ENCODE measurements at regions of chr5 and their contacts with region 1.

Region 1: DNA sequence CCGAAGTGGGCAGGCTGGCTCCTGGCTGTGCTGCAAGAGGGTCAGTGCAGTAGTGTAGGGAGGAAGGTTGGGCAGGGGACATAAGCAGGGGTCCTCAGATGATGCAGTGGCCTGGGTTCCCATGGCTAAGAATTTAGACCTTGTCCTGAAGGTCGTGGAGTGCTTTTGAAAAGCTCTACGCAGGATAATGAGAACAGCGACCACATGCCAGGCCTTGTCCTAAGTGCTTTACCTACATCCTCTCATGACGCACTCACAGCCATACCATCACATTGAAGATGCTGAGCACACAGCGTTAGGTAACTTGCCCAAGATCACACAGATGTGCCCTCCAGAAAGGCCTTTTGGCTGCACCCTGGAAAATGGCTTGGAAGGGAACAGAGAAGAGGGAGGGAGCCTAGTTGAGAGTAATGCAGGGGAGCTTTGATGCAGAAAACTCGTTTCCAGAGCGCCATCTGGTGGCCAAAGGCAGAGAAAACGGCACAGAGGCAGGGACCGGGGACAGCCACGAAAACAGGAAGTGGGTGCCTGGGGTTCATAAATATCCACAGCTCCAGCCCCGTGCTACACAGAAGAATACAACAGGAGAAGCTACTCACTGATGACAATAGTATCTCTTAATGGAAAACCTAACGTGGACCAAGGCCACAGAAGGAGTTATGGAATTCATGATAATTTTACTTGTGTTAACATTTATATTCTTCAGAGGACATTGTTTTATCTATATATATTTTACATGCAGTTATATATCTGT is 2.6 kb upstream of the PCDH12 start:
- DNase-seq: peak; percentile 83 to 94 (median 89)
- H3K4me3 ChIP-seq: peak overlapping the region in 11 of 59 donors; percentile 6 to 39 (median 24)
- H3K27ac ChIP-seq: peak overlapping the region in 50 of 59 donors; percentile 1 to 80 (median 56)
- H3K27me3 ChIP-seq: no peaks in the 10 kb centered on the region
- CTCF ChIP-seq: peak; percentile 82 to 98 (median 94)

Region 2: DNA sequence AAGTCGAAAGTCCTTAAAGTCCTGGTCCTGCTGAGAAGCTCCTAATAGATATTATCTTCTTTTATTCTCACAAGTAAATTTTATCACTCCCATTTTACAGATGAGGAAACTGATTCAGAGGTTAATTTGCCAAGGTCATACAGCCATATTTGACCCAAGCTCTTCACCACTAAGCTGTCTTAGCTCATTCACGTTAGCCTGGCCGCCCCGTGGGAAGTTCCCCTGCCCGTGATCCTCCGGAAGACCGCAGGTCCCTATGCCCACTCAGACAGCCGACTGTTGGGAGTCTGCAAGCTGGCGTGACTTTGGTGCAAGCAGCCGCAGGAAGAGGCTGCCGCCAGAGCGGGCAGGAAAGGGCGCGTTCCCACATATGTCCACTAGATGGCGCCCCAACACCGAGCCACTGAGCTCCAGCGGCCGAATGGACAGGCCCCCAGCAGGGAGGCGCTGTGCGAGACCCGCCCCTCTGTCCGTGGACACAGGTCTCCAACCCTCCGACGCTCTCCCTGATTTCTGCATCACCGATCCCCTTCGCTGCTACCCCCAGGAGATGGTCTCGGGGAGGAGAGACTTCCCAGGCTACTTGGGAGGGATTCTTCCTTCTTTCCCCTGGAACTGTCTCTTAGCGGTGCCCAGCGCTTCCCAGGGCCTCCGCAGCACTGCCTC is 268.6 kb before region 1 on chr5:
- intact Hi-C with region 1: loop called (anchors 2 kb)
- DNase-seq: peak; percentile 82 to 92 (median 88)
- H3K4me3 ChIP-seq: peak overlapping the region in 57 of 59 donors; percentile 8 to 67 (median 47)
- H3K27ac ChIP-seq: peak overlapping the region in 48 of 59 donors; percentile 1 to 88 (median 72)
- H3K27me3 ChIP-seq: no peaks in the 10 kb centered on the region
- CTCF ChIP-seq: peak; percentile 94 to 100 (median 100)

Region 3: DNA sequence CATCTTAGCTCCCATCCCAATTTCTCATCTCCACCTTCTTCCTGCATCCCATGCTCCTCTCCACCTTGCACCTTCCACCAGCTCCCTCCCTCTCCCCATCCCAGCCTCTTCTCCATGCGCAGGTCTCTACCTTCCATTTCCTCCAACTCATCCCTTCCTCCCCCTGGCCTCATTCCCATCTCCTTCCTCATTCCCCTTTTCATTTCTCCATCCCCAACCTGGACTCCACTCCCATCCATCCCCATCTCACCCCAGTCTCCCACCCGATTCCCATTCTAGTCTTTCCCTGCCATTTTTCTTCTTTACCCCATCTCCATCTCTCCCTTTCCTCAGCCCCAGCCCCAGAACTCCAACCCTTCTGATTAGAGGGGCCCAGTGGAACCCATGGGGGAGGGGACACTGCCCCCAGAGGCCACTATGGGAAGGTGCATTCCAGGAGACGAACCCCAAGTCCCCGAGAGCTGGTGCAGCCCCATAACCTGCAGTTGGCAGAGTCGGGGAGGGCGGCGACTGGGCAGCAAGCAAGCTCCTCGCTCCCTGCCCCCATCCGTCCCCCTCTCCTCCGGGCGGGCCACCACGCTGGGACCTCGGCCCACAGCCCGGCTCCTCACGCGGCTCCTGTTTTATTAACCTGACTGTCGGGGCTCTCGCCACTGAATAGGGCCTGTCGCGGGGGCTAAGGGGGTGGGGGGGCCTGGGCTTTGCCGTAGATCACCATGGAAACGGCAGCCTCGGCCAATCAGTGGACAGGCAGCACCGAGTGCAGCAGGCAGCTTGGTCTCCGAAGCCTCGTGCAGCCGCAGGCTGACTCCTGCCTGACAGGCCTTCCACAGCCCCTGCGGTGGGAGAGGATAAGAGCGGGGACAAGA is 149.1 kb before region 1 on chr5:
- intact Hi-C with region 1: loop called in 1 of 2 experiments (anchors 5 kb)
- DNase-seq: peak; percentile 45 to 81 (median 68)
- H3K4me3 ChIP-seq: peak overlapping the region in 48 of 59 donors; percentile 4 to 53 (median 32)
- H3K27ac ChIP-seq: peak overlapping the region in 52 of 59 donors; percentile 16 to 84 (median 69)
- H3K27me3 ChIP-seq: no peaks in the 10 kb centered on the region
- CTCF ChIP-seq: peak in 55 of 56 donors; percentile 25 to 71 (median 57)

Region 4: DNA sequence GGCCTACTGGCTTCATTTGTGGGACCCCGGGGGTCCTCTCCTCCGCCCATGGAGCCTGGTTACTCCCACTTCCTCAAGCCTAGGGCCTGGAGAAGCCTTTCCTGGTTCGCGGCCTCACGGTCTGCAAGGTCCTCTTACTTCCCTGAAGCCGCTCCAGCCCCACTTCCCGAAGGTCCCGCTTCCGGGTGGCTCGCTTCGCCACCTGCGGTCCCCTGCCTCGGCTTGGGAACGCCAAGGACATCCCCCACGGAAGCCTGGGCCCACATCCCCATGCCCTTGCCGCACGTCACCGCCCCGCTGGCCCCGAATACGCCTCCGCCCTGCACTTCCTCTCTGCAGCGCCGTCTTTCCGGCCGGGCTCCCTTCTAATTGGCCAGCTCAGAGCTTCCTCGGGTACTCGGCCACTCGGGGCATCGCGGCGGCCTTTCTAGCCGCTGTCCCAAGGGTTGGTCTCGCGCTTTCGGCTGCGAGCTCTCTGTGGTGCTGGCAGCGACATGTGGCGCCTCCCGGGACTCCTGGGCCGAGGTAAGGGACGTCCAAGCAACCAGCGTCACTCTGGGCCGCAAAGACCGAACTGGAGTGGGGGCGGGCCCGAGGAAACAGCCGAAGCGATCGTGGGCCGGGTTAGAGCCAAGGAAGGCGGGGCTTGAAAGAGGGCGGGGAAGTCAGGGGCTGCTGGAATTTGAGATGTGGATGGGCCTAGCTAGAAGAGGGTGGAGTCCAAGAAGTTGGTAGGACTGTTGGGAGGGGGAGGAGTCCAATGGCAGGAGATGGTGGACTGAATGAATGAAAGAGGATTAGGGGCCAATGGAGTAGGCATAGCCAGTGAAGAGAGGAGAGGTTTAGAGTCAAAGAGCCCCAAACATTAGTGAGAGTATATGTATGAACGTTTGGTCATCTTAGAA is 36.9 kb before region 1 on chr5 and contains the start of gene DELE1:
- intact Hi-C with region 1: loop called in 1 of 2 experiments (anchors 5 kb)
- DNase-seq: peak; percentile 81 to 95 (median 94)
- H3K4me3 ChIP-seq: peak within 1 kb of the TSS; percentile 59 to 99 (median 82)
- H3K27ac ChIP-seq: peak within 1 kb of the TSS; percentile 79 to 100 (median 96)
- H3K27me3 ChIP-seq: no peaks in the 10 kb centered on the region
- CTCF ChIP-seq: peak in 38 of 56 donors; percentile 3 to 60 (median 26)
- total RNA-seq, gene DELE1: 54.4 to 110 (median 82.7) TPM